AG04449 (cell line): ENCODE measurements at regions of chr1 and their contacts with region 1.

Region 1: GRCh38 chr1:206544562-206545257 is 37.4 kb downstream of the RASSF5 start:
- DNase-seq: no peak
- H3K4me3 ChIP-seq: no peak overlapping the region
- CTCF ChIP-seq: peak; percentile 88

Region 2: GRCh38 chr1:206507284-206508129 is 37.2 kb before region 1 on chr1 and contains the start of gene RASSF5:
- CTCF ChIA-PET with region 1: interaction called, 53 read pairs
- POLR2A ChIA-PET with region 1: no interaction called
- DNase-seq: no peak
- H3K4me3 ChIP-seq: peak within 1 kb of the TSS; percentile 61
- CTCF ChIP-seq: no peak

Region 3: DNA sequence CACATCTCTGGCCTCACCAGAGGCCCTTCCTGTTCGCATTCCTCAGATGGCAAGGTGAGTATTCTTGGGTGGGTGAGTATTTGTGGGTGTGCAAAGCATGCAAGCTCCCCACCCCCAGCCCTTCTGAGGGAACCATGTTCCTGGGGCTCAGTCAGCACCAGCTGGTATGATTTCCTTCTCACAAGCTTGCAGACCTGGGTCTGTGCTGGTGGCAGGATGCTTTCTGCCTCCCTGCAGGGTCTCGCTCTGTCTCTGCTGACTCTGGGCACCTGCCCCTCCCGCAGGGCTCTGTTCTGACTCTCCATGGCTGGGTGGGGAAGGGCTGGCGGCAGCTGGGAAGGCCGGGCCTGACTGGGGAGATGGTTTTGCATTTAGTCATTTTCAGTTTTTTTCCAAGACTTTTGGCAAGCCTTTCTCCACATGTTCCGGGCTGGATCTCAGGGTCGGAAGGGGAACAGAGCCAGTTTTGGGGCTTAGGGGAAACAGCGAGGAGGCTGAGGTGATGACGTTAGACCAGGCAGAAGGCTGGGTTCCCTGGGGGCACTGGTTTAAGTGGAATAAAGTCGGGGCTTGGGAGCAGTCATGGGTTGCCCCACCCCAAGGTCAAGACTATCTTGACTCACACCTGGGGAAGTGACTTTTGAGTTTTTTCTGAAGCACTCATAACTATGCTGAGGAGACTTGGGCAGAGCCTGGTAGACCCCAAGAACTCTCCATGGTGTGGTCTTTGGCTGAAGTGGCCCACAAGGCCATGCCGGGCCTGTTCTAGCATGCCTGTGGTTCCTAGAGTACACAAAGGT is 31.2 kb before region 1 on chr1:
- CTCF ChIA-PET with region 1: interaction called, 15 read pairs
- POLR2A ChIA-PET with region 1: no interaction called
- DNase-seq: no peak
- H3K4me3 ChIP-seq: no peak overlapping the region
- CTCF ChIP-seq: no peak

Region 4: GRCh38 chr1:206524739-206525369 is 19.9 kb before region 1 on chr1:
- CTCF ChIA-PET with region 1: interaction called, 35 read pairs
- POLR2A ChIA-PET with region 1: no interaction called
- DNase-seq: no peak
- H3K4me3 ChIP-seq: no peak overlapping the region
- CTCF ChIP-seq: no peak

Region 5: DNA sequence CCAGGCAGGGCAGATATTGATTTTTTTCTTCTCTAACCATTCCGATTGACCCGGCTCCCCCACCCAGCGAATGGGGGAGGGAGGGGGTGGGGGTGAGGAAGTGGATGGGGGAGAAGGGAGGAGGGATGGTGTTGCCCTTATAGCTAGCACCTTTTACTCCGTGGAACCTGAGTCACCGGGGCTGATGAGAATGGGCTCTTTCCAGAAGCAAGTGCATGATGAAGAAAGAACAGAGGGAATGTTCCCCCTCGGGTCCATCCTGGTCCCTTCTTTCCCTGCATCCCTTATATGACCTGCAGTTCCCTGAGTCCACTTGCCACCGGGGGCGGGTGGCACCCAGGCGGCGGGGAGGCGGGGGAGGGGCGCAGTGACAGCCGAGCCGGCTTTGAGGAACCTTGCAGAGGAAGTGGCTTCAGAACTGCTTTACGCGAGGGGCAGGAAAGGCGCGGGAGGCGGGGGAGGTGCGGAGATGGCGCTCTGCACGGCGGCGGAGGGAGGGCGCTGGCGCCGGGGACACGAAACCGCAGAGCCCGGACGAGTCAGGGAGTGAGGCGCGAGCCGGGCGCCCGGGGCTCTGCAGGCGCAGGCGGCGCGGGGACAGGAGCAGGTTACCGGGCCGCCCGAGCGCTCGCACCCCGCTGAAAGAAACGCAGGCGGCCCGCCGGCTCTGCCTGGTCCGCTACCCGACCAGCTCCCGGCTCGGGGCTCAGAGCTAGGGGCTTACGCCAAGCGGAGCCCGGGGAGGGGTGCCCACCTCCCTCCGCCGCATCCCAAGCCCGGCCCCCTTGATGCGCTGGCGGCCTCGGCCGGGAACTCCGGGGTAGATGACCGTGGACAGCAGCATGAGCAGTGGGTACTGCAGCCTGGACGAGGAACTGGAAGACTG is 12.3 kb after region 1 on chr1:
- CTCF ChIA-PET with region 1: interaction called, 136 read pairs
- POLR2A ChIA-PET with region 1: no interaction called
- DNase-seq: no peak
- H3K4me3 ChIP-seq: peak overlapping the region; percentile 53
- CTCF ChIP-seq: no peak

Region 6: DNA sequence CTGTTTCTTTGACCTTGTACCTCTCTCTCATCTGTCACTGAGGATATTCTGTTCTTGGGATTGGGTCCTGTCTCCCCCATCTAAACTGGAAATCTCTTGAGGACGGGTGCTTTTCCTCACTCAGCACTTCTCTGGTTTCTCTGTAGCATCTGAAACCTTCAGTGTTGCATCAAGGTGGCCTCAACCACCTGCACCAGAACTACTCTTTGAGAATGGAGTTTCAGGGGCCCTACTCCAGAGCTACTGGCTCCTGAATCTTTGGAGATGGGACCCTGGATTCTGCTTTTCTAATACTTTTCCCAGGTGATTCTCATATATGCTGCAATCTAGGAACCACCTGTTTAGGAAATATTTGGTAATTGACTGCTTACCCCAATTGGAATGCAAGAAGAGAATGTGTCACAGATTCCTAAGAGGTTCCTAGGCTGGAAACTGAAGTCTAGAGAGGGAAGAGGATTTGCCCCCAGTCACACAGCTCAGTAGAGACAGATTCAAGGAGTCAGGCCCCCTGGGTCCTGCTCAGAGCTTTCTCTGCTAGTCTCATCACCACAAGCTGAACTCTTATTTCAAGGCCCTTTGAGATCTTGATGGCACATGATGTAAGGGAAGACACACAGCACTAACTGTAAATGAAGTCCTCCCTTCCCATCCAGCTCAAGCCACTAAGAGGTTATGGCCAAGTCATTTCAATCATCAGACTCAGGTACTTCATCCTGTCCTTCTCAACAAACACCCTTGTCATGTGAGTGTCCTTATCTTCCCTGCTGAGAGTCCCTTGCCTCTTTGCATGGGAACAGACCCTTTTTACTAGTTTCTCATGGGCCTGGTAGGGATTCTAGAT is 18.9 kb after region 1 on chr1:
- CTCF ChIA-PET with region 1: interaction called, 136 read pairs
- POLR2A ChIA-PET with region 1: no interaction called
- DNase-seq: no peak
- H3K4me3 ChIP-seq: no peak overlapping the region
- CTCF ChIP-seq: no peak

Region 7: DNA sequence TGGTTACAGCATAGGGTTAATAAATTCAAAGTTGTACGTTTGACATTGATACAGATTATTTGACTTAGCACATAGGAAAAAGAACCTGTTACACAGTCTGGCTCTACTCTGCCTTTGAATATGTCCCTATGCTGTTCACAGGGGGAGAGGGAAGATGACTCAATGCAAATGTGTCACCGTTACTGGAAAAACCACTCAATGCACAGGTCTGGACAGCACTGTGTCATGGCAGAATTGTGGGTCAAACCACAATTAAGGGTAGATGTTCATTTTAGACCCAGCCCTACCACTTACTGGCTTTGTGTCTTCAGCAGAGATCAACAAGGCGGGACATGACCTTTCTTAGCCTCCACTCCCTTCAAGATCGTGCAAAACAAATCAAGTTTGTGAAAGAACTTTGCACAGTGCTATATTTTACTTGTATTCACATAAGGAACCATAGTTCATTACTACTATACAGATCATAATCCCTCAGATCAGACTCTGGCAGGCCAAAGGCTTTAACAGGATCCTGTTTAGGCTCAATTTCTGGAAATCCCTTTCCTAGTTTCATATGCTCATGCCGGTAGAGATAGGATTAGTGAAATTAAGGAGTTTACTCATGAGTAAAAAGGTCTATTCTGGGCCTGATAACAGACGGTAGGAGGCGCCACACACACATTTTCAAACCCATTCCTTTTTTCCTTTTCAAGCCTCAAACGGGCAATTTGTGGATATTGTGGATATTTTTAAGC is 45.5 kb after region 1 on chr1:
- CTCF ChIA-PET with region 1: interaction called, 215 read pairs
- POLR2A ChIA-PET with region 1: no interaction called
- DNase-seq: peak; percentile 41
- H3K4me3 ChIP-seq: no peak overlapping the region
- CTCF ChIP-seq: no peak

Region 8: GRCh38 chr1:207751790-207752455 is 1207.2 kb after region 1 on chr1 and contains the start of gene CD46:
- CTCF ChIA-PET with region 1: no interaction called
- POLR2A ChIA-PET with region 1: no interaction called
- DNase-seq: peak; percentile 29
- H3K4me3 ChIP-seq: peak within 1 kb of the TSS; percentile 84
- CTCF ChIP-seq: no peak